Left cardiac atrium (tissue), 4 donors: ENCODE measurements at regions of chr9 and their contacts with region 1.

Region 1: GRCh38 chr9:136143216-136144001 is 24.7 kb upstream of the TMEM250 start:
- DNase-seq: no peak
- ATAC-seq: no peak

Region 2: GRCh38 chr9:136089697-136090045 is 53.7 kb before region 1 on chr9:
- intact Hi-C with region 1: loop called in 1 of 2 experiments (anchors 10 kb)
- DNase-seq: no peak
- ATAC-seq: no peak